ENCODE measurements at regions of chr1 and their contacts with region 1.

Region 1: GRCh38 chr1:223748773-223749733 is 36.7 kb downstream of the CAPN2 start:
- DNase-seq: peak; percentile 19 to 85 (median 61)
- ATAC-seq: peak; percentile 86
- H3K4me3 ChIP-seq: peak overlapping the region; percentile 63
- H3K4me3 Mint-ChIP-seq: peak overlapping the region; percentile 82
- H3K27ac ChIP-seq: no peak overlapping the region
- H3K27ac Mint-ChIP-seq: no peak overlapping the region
- H3K4me1 ChIP-seq: peaks cover 18% of the 10 kb centered on the region
- H3K4me1 Mint-ChIP-seq: peaks cover 7% of the 10 kb centered on the region
- H3K27me3 ChIP-seq: no peaks in the 10 kb centered on the region
- H3K27me3 Mint-ChIP-seq: no peaks in the 10 kb centered on the region
- CTCF ChIP-seq: peak; percentile 99

Region 2: DNA sequence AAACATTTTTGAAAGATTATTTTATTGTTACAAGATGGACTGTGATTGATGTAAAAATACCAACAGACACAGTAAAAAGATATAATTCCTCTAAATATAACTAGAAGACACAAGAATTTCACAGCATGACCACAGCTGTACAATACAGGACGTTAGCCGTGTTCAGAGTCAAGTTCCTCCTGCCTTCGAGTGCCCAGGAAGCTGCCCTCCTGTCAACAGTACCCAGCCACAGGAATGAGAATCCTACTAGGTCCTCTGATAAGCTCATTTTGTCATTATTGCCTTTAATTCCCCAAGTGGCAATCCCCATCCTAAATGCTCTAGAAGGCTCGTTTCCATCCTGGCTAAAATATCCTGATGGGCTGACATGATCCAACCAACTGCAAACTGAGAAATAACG is 53.1 kb before region 1 on chr1:
- CTCF ChIA-PET with region 1: interaction called, 57 read pairs
- POLR2A ChIA-PET with region 1: interaction called, 6 read pairs
- intact Hi-C with region 1: loop called (anchors 1 kb)
- DNase-seq: no peak
- ATAC-seq: no peak
- H3K4me3 ChIP-seq: no peak overlapping the region
- H3K4me3 Mint-ChIP-seq: no peak overlapping the region
- H3K27ac ChIP-seq: no peak overlapping the region
- H3K27ac Mint-ChIP-seq: no peak overlapping the region
- H3K4me1 ChIP-seq: peaks cover 8% of the 10 kb centered on the region
- H3K4me1 Mint-ChIP-seq: peaks cover 8% of the 10 kb centered on the region
- H3K27me3 ChIP-seq: no peaks in the 10 kb centered on the region
- H3K27me3 Mint-ChIP-seq: no peaks in the 10 kb centered on the region
- CTCF ChIP-seq: no peak

Region 3: GRCh38 chr1:223700942-223701637 is 48.0 kb before region 1 on chr1:
- CTCF ChIA-PET with region 1: interaction called, 57 read pairs
- POLR2A ChIA-PET with region 1: interaction called, 6 read pairs
- intact Hi-C with region 1: loop called (anchors 1 kb)
- DNase-seq: no peak
- ATAC-seq: no peak
- H3K4me3 ChIP-seq: no peak overlapping the region
- H3K4me3 Mint-ChIP-seq: no peak overlapping the region
- H3K27ac ChIP-seq: no peak overlapping the region
- H3K27ac Mint-ChIP-seq: no peak overlapping the region
- H3K4me1 ChIP-seq: peaks cover 8% of the 10 kb centered on the region
- H3K4me1 Mint-ChIP-seq: peaks cover 8% of the 10 kb centered on the region
- H3K27me3 ChIP-seq: no peaks in the 10 kb centered on the region
- H3K27me3 Mint-ChIP-seq: no peaks in the 10 kb centered on the region
- CTCF ChIP-seq: no peak

Region 4: GRCh38 chr1:223712194-223712849 is 36.7 kb before region 1 on chr1 and contains the start of gene CAPN2:
- CTCF ChIA-PET with region 1: interaction called, 46 read pairs
- POLR2A ChIA-PET with region 1: interaction called, 20 read pairs
- intact Hi-C with region 1: loop called (anchors 1 to 5 kb)
- DNase-seq: peak; percentile 16 to 87 (median 52)
- ATAC-seq: peak; percentile 48
- H3K4me3 ChIP-seq: peak within 1 kb of the TSS; percentile 84
- H3K4me3 Mint-ChIP-seq: peak within 1 kb of the TSS; percentile 90
- H3K27ac ChIP-seq: peak within 1 kb of the TSS; percentile 68 to 77
- H3K27ac Mint-ChIP-seq: peak within 1 kb of the TSS; percentile 90
- H3K4me1 ChIP-seq: peaks cover 64% of the 10 kb centered on the region
- H3K4me1 Mint-ChIP-seq: peaks cover 65% of the 10 kb centered on the region
- H3K27me3 ChIP-seq: no peaks in the 10 kb centered on the region
- H3K27me3 Mint-ChIP-seq: no peaks in the 10 kb centered on the region
- CTCF ChIP-seq: peak; percentile 33
- total RNA-seq, gene CAPN2: 110 to 114 TPM

Region 5: GRCh38 chr1:223726380-223727001 is 22.6 kb before region 1 on chr1:
- CTCF ChIA-PET with region 1: interaction called, 25 read pairs
- POLR2A ChIA-PET with region 1: no interaction called
- intact Hi-C with region 1: no loop called
- DNase-seq: peak; percentile 56 to 95 (median 83)
- ATAC-seq: peak; percentile 97
- H3K4me3 ChIP-seq: no peak overlapping the region
- H3K4me3 Mint-ChIP-seq: peak overlapping the region; percentile 30
- H3K27ac ChIP-seq: peak overlapping the region; percentile 54 to 77
- H3K27ac Mint-ChIP-seq: peak overlapping the region; percentile 87
- H3K4me1 ChIP-seq: peaks cover 68% of the 10 kb centered on the region
- H3K4me1 Mint-ChIP-seq: peaks cover 69% of the 10 kb centered on the region
- H3K27me3 ChIP-seq: no peaks in the 10 kb centered on the region
- H3K27me3 Mint-ChIP-seq: no peaks in the 10 kb centered on the region
- CTCF ChIP-seq: no peak

Region 6: GRCh38 chr1:223738465-223739365 is 10.3 kb before region 1 on chr1:
- CTCF ChIA-PET with region 1: interaction called, 15 read pairs
- POLR2A ChIA-PET with region 1: no interaction called
- intact Hi-C with region 1: no loop called
- DNase-seq: no peak
- ATAC-seq: no peak
- H3K4me3 ChIP-seq: no peak overlapping the region
- H3K4me3 Mint-ChIP-seq: no peak overlapping the region
- H3K27ac ChIP-seq: no peak overlapping the region
- H3K27ac Mint-ChIP-seq: no peak overlapping the region
- H3K4me1 ChIP-seq: peaks cover 13% of the 10 kb centered on the region
- H3K4me1 Mint-ChIP-seq: no peaks in the 10 kb centered on the region
- H3K27me3 ChIP-seq: no peaks in the 10 kb centered on the region
- H3K27me3 Mint-ChIP-seq: no peaks in the 10 kb centered on the region
- CTCF ChIP-seq: no peak

Region 7: GRCh38 chr1:223870617-223871574 is 121.8 kb after region 1 on chr1:
- CTCF ChIA-PET with region 1: no interaction called
- POLR2A ChIA-PET with region 1: no interaction called
- intact Hi-C with region 1: no loop called
- DNase-seq: peak in 2 of 14 experiments; percentile 32 to 34
- ATAC-seq: no peak
- H3K4me3 ChIP-seq: peak overlapping the region; percentile 37
- H3K4me3 Mint-ChIP-seq: peak overlapping the region; percentile 58
- H3K27ac ChIP-seq: no peak overlapping the region
- H3K27ac Mint-ChIP-seq: no peak overlapping the region
- H3K4me1 ChIP-seq: no peaks in the 10 kb centered on the region
- H3K4me1 Mint-ChIP-seq: no peaks in the 10 kb centered on the region
- H3K27me3 ChIP-seq: peaks cover 0 to 4% of the 10 kb centered on the region in 2 experiments
- H3K27me3 Mint-ChIP-seq: peaks cover 42% of the 10 kb centered on the region
- CTCF ChIP-seq: no peak